Panc1 (cell line): ENCODE measurements at regions of chr9 and their contacts with region 1.

Region 1: GRCh38 chr9:6864102-6864501 is 106.3 kb downstream of the KDM4C start:
- DNase-seq: no peak
- ATAC-seq: no peak
- H3K4me3 ChIP-seq: no peak overlapping the region
- H3K27ac ChIP-seq: no peak overlapping the region
- H3K4me1 ChIP-seq: no peaks in the 10 kb centered on the region
- H3K27me3 ChIP-seq: no peaks in the 10 kb centered on the region
- CTCF ChIP-seq: no peak

Region 2: DNA sequence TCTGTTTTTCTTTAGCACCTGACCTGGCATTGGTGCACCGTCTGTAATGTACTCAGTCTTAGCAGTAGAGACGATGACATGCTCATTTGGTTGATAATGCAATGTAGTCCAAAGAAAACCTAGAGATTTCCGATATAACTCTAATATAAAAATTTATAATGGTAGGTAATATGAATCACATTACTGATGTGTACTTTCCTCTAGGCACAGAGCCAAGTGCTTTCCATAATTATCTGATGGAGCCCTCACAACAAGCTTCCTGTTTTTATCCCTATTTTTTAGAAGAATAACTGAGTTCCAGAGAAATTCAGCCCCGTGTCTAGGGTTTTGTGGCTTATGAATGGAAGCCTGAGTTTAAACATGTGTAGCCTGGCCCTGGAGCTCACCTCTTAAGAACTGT is 52.7 kb before region 1 on chr9:
- CTCF ChIA-PET with region 1: no interaction called
- POLR2A ChIA-PET with region 1: interaction called, 12 read pairs
- in situ Hi-C with region 1: no loop called
- intact Hi-C with region 1: no loop called
- DNase-seq: no peak
- ATAC-seq: no peak
- H3K4me3 ChIP-seq: no peak overlapping the region
- H3K27ac ChIP-seq: no peak overlapping the region
- H3K4me1 ChIP-seq: no peaks in the 10 kb centered on the region
- H3K27me3 ChIP-seq: no peaks in the 10 kb centered on the region
- CTCF ChIP-seq: no peak

Region 3: DNA sequence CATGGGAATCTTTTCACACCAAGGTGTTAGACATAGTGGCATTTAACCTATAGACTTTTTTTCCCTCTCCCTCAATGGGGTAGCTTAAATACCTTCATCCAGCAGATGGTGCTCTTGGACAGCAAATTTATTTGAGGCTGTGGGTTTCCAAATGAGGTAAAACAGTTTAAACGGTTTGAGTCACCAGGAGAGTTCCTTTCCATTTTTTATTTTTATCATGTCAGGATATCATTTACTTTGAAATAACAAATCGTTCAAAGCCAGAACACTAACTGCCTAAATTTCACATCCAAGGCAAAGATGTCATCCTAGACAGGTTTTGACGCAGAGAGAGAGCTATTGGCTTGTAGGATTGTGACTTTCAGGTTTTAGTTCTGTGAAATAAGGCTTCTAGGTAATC is 36.7 kb before region 1 on chr9:
- CTCF ChIA-PET with region 1: no interaction called
- POLR2A ChIA-PET with region 1: no interaction called
- in situ Hi-C with region 1: no loop called
- intact Hi-C with region 1: no loop called
- DNase-seq: no peak
- ATAC-seq: peak; percentile 62; the same call in 1 of the 2 replicates
- H3K4me3 ChIP-seq: no peak overlapping the region
- H3K27ac ChIP-seq: no peak overlapping the region
- H3K4me1 ChIP-seq: no peaks in the 10 kb centered on the region
- H3K27me3 ChIP-seq: no peaks in the 10 kb centered on the region
- CTCF ChIP-seq: peak; percentile 31; the same call in 1 of the 2 replicates